Endothelial cell of umbilical vein (primary cell): ENCODE measurements at regions of chr13 and their contacts with region 1.

Region 1: DNA sequence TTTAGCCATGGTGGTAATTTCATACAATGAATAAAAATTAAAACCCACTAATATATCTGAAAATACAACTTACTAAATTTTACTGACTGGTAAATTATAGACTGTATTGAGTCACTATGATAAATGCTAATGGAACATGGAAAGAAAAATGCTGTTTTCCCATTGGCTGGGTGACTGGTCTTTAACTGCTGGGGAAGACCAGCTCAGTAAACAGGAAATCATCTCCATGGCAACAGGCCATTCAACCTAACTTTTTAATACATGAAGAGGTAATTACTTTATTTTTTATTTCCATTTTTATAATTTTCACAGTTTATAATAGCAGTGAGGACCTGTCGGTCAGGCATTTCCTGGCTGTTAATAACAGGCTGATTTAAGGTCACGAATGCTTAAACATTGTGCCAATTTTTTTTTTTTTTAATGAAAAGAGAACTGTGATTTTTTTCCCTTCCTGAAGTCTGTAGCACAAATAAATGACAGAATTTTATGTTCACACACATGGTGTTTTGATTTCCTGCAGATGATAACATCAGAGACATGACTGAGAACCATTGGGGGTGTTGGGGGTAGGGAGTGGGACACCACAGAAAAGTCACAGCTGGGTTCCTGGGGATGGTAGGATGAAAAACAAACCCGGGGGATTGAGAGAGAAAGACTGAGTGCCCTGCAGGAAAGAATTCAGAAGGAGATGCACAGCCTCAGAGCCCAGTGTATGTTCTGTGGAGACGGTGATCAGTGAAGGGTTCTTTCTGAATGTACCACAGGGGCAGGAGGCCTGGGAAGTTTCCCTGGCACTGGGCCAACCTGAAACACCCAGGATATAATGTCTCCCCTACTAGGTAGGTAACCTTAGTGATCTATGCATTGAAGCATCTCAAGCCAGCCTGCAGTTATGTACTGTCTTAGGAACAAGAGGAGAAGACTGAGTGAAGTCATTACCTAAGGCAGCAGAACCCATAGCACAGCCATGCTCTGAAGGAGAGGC is 297.1 kb downstream of the COG6 start:
- DNase-seq: peak; percentile 97
- H3K4me3 ChIP-seq: no peak overlapping the region
- H3K27ac ChIP-seq: peak overlapping the region; percentile 88
- H3K4me1 ChIP-seq: peaks cover 24% of the 10 kb centered on the region
- H3K27me3 ChIP-seq: no peaks in the 10 kb centered on the region
- CTCF ChIP-seq: no peak
- POLR2A ChIP-seq: no peak

Region 2: GRCh38 chr13:39783050-39783449 is 169.5 kb before region 1 on chr13:
- CTCF ChIA-PET with region 1: interaction called, 5 read pairs
- POLR2A ChIA-PET with region 1: no interaction called
- dilution Hi-C with region 1: no loop called
- intact Hi-C with region 1: loop called (anchors 1 kb)
- DNase-seq: peak; percentile 80
- H3K4me3 ChIP-seq: no peak overlapping the region
- H3K27ac ChIP-seq: no peak overlapping the region
- H3K4me1 ChIP-seq: peaks cover 62% of the 10 kb centered on the region
- H3K27me3 ChIP-seq: no peaks in the 10 kb centered on the region
- CTCF ChIP-seq: no peak
- POLR2A ChIP-seq: no peak

Region 3: DNA sequence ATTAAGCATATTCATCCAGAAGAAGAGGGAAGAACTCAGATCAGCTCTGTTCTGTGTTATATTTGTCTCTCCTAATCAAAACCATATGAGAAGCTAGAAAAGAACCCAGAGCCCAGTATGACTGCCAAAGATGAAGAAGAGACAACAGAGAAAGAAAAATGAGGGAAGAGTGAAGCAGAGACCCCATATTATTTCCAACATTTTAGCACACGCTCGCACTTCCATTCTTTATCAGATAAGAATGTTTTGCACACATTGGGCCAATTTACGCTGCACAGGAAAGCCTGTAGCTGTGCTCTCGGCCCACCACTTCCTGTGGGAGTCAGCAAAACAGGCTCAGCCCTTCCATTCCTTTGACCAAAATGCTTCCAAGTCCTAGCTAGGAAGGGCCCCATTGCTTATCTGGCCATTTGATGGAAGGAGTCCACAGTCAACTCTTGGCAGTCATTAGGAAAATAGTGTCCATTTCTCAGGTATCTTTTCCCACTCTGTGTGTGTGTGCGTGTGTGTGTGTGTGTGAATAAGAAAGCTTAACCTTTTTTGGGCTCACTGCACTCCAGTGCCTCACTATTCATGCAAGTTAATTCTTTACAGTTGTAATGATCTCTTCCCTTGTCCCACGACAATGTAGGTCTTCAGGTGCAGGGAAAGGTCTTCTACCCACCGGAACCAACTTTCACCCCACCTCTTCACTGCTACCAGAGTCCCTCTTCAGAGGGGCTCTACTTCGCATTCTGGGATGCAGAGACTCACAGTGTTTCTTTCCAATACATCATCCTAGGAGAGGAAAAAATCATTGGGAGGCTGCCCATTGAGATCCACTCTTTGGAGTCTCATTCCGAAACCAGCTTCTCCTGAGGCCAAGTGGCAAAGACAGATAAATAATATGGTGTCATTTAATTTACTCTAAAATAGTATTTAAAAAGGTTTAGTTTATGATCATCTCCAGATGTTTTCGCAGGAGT is 59.5 kb before region 1 on chr13:
- CTCF ChIA-PET with region 1: interaction called, 5 read pairs
- POLR2A ChIA-PET with region 1: interaction called, 3 read pairs
- dilution Hi-C with region 1: no loop called
- intact Hi-C with region 1: loop called (anchors 1 kb)
- DNase-seq: peak; percentile 95
- H3K4me3 ChIP-seq: peak overlapping the region in 1 of 3 experiments; percentile 6
- H3K27ac ChIP-seq: peak overlapping the region; percentile 86
- H3K4me1 ChIP-seq: peaks cover 52% of the 10 kb centered on the region
- H3K27me3 ChIP-seq: no peaks in the 10 kb centered on the region
- CTCF ChIP-seq: no peak
- POLR2A ChIP-seq: no peak

Region 4: GRCh38 chr13:40082639-40083038 is 130.1 kb after region 1 on chr13:
- CTCF ChIA-PET with region 1: no interaction called
- POLR2A ChIA-PET with region 1: no interaction called
- dilution Hi-C with region 1: no loop called
- intact Hi-C with region 1: loop called (anchors 1 kb)
- DNase-seq: peak; percentile 99
- H3K4me3 ChIP-seq: no peak overlapping the region
- H3K27ac ChIP-seq: peak overlapping the region; percentile 71
- H3K4me1 ChIP-seq: peaks cover 11% of the 10 kb centered on the region
- H3K27me3 ChIP-seq: no peaks in the 10 kb centered on the region
- CTCF ChIP-seq: peak; percentile 30 to 62
- POLR2A ChIP-seq: no peak

Region 5: DNA sequence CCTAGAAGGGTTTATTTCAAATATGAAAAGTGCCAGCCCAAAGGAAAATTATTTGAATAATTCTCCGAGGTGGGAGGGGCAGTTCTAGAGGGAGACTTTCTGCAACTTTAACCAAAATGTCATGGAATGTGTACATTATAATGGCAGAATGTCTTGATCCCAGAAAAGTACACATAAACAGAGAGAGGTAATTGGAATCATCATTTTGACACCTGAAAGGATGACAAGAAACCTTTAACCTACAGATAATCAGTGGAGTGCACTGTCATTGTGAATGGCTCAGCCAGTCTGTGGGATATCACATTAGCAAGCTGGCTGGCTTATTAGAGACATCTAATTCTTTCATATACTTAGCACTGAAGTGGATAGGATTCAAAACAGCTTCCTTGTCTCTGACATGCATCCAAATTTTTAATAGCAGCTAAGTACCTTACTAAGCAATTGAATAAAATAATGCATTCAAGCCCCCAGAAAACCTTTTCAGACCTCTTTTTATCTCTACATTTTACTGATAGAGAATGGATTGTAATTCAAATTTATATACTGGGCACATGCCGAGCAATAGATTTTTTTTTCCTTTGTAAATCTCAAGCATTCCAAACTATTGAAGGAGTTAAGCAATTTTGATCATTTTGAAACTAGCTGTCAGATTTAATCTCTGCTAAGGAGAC is 171.6 kb after region 1 on chr13:
- CTCF ChIA-PET with region 1: no interaction called
- POLR2A ChIA-PET with region 1: no interaction called
- dilution Hi-C with region 1: no loop called
- intact Hi-C with region 1: no loop called
- DNase-seq: no peak
- H3K4me3 ChIP-seq: no peak overlapping the region
- H3K27ac ChIP-seq: no peak overlapping the region
- H3K4me1 ChIP-seq: no peaks in the 10 kb centered on the region
- H3K27me3 ChIP-seq: no peaks in the 10 kb centered on the region
- CTCF ChIP-seq: no peak
- POLR2A ChIP-seq: no peak

Region 6: GRCh38 chr13:40503966-40504591 is 551.5 kb after region 1 on chr13:
- CTCF ChIA-PET with region 1: no interaction called
- POLR2A ChIA-PET with region 1: no interaction called
- dilution Hi-C with region 1: no loop called
- intact Hi-C with region 1: loop called (anchors 1 kb)
- DNase-seq: peak; percentile 99
- H3K4me3 ChIP-seq: no peak overlapping the region
- H3K27ac ChIP-seq: peak overlapping the region; percentile 99
- H3K4me1 ChIP-seq: peaks cover 51% of the 10 kb centered on the region
- H3K27me3 ChIP-seq: no peaks in the 10 kb centered on the region
- CTCF ChIP-seq: no peak
- POLR2A ChIP-seq: peak; percentile 74

Region 7: GRCh38 chr13:40770934-40771618 is 818.5 kb after region 1 on chr13 and contains the start of gene MRPS31:
- CTCF ChIA-PET with region 1: no interaction called
- POLR2A ChIA-PET with region 1: no interaction called
- dilution Hi-C with region 1: no loop called
- intact Hi-C with region 1: loop called (anchors 10 kb)
- DNase-seq: peak; percentile 93
- H3K4me3 ChIP-seq: peak within 1 kb of the TSS; percentile 71 to 91 (median 77)
- H3K27ac ChIP-seq: peak within 1 kb of the TSS; percentile 75
- H3K4me1 ChIP-seq: peaks cover 6% of the 10 kb centered on the region
- H3K27me3 ChIP-seq: no peaks in the 10 kb centered on the region
- CTCF ChIP-seq: no peak
- POLR2A ChIP-seq: peak; percentile 88
- total RNA-seq, gene MRPS31: 17.8 and 19.9 TPM in 2 replicates